Caco-2 (cell line): ENCODE measurements at regions of chr21 and their contacts with region 1.

Region 1: GRCh38 chr21:36141513-36141925 is 6.6 kb downstream of the CBR3 start:
- DNase-seq: peak; percentile 95 to 96
- H3K4me3 ChIP-seq: no peak overlapping the region
- H3K4me3 Mint-ChIP-seq: no peak overlapping the region
- H3K27ac Mint-ChIP-seq: no peak overlapping the region
- H3K4me1 ChIP-seq: peaks cover 4% of the 10 kb centered on the region
- H3K4me1 Mint-ChIP-seq: peaks cover 15% of the 10 kb centered on the region
- H3K27me3 ChIP-seq: no peaks in the 10 kb centered on the region
- H3K27me3 Mint-ChIP-seq: no peaks in the 10 kb centered on the region
- CTCF ChIP-seq: peak; percentile 64 to 78

Region 2: DNA sequence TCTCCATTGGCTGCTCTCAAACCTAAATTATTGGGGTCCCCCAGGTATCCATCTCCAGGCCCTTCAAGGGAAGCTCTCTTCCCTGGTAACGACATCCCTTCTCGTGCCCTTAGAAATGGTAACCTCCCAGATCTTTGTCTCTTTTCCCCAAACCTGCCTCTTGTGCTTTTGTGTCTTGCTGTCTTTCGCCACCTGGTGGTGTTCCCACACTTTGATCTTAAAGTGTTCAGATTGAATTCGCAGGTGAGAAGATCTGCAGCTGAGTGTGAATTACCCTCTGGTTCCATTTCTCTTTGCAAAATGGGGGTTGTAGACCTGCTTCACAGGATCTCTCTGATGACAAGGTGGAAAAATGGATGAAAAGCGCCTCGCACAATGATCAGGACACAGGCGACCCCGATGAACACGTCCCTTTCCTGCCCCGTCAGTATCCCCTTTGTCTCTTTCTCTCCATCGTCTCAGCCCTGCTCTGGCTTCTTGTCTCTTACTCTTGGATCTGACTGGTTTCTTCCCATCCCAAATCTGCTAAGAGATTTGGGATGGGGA is 68.2 kb after region 1 on chr21:
- CTCF ChIA-PET with region 1: interaction called, 7 read pairs
- POLR2A ChIA-PET with region 1: no interaction called
- intact Hi-C with region 1: loop called (anchors 1 kb)
- DNase-seq: peak; percentile 74 to 76
- H3K4me3 ChIP-seq: no peak overlapping the region
- H3K4me3 Mint-ChIP-seq: peak overlapping the region; percentile 32
- H3K27ac Mint-ChIP-seq: peak overlapping the region; percentile 81
- H3K4me1 ChIP-seq: peaks cover 16% of the 10 kb centered on the region
- H3K4me1 Mint-ChIP-seq: peaks cover 25% of the 10 kb centered on the region
- H3K27me3 ChIP-seq: no peaks in the 10 kb centered on the region
- H3K27me3 Mint-ChIP-seq: no peaks in the 10 kb centered on the region
- CTCF ChIP-seq: peak; percentile 74 to 79

Region 3: GRCh38 chr21:36235058-36235582 is 93.6 kb after region 1 on chr21:
- CTCF ChIA-PET with region 1: interaction called, 4 read pairs
- POLR2A ChIA-PET with region 1: no interaction called
- intact Hi-C with region 1: loop called (anchors 1 kb)
- DNase-seq: peak; percentile 87 to 93
- H3K4me3 ChIP-seq: no peak overlapping the region
- H3K4me3 Mint-ChIP-seq: peak overlapping the region; percentile 35
- H3K27ac Mint-ChIP-seq: peak overlapping the region; percentile 79
- H3K4me1 ChIP-seq: peaks cover 23% of the 10 kb centered on the region
- H3K4me1 Mint-ChIP-seq: peaks cover 23% of the 10 kb centered on the region
- H3K27me3 ChIP-seq: no peaks in the 10 kb centered on the region
- H3K27me3 Mint-ChIP-seq: no peaks in the 10 kb centered on the region
- CTCF ChIP-seq: no peak

Region 4: GRCh38 chr21:36385233-36386030 is 243.9 kb after region 1 on chr21 and contains the start of gene CHAF1B:
- CTCF ChIA-PET with region 1: no interaction called
- POLR2A ChIA-PET with region 1: no interaction called
- intact Hi-C with region 1: loop called (anchors 5 kb)
- DNase-seq: peak; percentile 82 to 90
- H3K4me3 ChIP-seq: peak within 1 kb of the TSS; percentile 52
- H3K4me3 Mint-ChIP-seq: peak within 1 kb of the TSS; percentile 74
- H3K27ac Mint-ChIP-seq: peak within 1 kb of the TSS; percentile 35
- H3K4me1 ChIP-seq: peaks cover 4% of the 10 kb centered on the region; the same call in 1 of the 2 replicates
- H3K4me1 Mint-ChIP-seq: peaks cover 4% of the 10 kb centered on the region
- H3K27me3 ChIP-seq: no peaks in the 10 kb centered on the region
- H3K27me3 Mint-ChIP-seq: no peaks in the 10 kb centered on the region
- CTCF ChIP-seq: no peak
- total RNA-seq, gene CHAF1B: 16.4 and 18.7 TPM in 2 replicates